Activated T-helper 1 cell treated with anti-CD3 and anti-CD28 coated beads, Interleukin-12 subunit alpha, Interleukin-12 subunit beta, Interleukin-2, Interleukin-4 antibody, amounts not matched to agents 30 ng/mL and 10 ng/mL and 1 ng/mL, durations not matched to agents 14 hours and 24 hours and 36 hours (primary cell): ENCODE measurements at regions of chr2 and their contacts with region 1.

Region 1: GRCh38 chr2:128727914-128728313 is 409.2 kb upstream of the HS6ST1 start:
- DNase-seq: no peak
- H3K4me3 Mint-ChIP-seq: no peak overlapping the region
- H3K27ac Mint-ChIP-seq: peak overlapping the region; percentile 14
- H3K4me1 Mint-ChIP-seq: peaks cover 26% of the 10 kb centered on the region
- H3K27me3 Mint-ChIP-seq: peaks cover 16% of the 10 kb centered on the region

Region 2: DNA sequence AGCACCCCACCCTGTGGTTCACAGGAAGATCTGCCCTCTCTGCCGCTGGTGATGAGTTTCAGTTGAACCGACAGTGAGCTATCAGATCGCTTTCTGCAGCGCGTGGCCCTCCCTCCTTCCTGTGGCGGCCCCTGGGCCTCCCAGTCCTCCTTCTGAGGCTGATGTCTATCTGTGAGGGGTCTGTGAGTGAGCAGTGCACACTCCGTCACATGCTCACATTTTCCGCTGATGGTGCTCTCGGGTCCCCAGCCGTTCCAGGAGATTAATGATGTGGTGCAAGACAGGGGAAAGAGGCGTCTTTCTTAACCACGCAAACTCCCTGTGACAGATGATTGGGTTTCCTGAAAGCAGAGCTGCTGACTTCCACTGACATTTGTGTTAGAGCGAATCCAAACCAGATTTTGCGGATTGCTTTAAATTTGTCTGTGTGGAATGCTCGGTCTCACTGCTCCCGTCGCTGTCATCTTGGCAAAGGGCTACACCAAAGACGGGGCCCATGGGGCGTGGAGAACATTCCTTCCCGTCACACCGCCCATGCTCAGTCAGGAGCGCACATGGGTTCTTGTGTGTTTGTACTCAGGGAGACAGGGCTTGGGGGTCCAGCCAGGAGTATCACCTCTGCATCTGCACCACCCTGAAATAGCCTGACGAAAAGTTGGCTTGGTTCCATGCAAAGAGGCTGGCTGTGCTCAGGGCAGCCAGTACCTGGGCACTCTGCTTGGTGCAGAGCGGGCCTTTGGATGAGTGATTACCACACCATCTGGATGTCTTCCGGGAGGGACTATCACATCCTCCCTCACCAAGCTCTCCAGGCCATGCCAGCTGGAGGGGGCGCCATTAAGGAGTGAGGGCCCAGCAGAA is 254.5 kb before region 1 on chr2:
- intact Hi-C with region 1: loop called (anchors 2 kb)
- DNase-seq: peak; percentile 26
- H3K4me3 Mint-ChIP-seq: peak overlapping the region; percentile 67
- H3K27ac Mint-ChIP-seq: peak overlapping the region; percentile 86
- H3K4me1 Mint-ChIP-seq: peaks cover 20% of the 10 kb centered on the region
- H3K27me3 Mint-ChIP-seq: peaks cover 6% of the 10 kb centered on the region

Region 3: GRCh38 chr2:128536925-128537620 is 190.8 kb before region 1 on chr2:
- intact Hi-C with region 1: loop called (anchors 5 kb)
- DNase-seq: no peak
- H3K4me3 Mint-ChIP-seq: no peak overlapping the region
- H3K27ac Mint-ChIP-seq: peak overlapping the region; percentile 4
- H3K4me1 Mint-ChIP-seq: peaks cover 24% of the 10 kb centered on the region
- H3K27me3 Mint-ChIP-seq: peaks cover 22% of the 10 kb centered on the region